Head of caudate nucleus (tissue), 42 donors: ENCODE measurements at regions of chr20 and their contacts with region 1.

Region 1: GRCh38 chr20:53915446-53916172 is 154.8 kb downstream of the BCAS1 start:
- DNase-seq: peak; percentile 83 to 99 (median 95)

Region 2: DNA sequence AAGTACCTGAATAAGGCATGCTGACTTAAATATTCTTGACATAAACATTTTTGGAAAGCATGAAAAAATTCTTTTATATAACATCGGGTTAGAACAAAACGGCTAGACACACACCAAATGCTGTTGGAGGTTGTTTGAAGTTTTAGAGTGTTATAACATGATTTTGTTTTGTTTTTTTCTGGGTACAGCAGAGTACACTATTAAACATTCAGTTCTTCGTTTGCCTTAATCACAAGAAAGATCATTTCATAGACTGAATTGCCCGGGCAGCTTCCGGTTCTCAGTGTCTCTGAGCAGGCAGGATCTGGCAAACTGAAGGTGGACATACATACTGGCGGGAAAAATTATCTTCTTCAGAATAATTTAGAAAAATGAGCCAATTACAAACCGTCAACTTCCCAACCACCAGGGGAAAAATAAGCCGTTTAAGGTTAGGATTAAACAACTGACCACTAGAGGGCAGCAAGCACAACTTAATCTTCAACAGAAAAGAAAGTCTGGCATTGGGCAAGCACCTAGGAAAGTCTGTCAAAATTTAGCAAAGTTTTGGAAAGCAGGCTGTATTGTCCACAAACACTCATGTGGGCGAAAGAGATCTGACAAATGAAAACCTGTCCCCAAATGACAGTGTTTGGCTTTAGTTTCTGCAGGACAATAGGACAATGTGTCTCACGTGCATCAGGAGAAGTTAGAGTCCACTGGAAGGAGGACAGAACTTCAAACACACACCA is 337.0 kb before region 1 on chr20:
- intact Hi-C with region 1: loop called (anchors 5 kb)
- DNase-seq: peak in 28 of 42 donors; percentile 17 to 90 (median 64)

Region 3: DNA sequence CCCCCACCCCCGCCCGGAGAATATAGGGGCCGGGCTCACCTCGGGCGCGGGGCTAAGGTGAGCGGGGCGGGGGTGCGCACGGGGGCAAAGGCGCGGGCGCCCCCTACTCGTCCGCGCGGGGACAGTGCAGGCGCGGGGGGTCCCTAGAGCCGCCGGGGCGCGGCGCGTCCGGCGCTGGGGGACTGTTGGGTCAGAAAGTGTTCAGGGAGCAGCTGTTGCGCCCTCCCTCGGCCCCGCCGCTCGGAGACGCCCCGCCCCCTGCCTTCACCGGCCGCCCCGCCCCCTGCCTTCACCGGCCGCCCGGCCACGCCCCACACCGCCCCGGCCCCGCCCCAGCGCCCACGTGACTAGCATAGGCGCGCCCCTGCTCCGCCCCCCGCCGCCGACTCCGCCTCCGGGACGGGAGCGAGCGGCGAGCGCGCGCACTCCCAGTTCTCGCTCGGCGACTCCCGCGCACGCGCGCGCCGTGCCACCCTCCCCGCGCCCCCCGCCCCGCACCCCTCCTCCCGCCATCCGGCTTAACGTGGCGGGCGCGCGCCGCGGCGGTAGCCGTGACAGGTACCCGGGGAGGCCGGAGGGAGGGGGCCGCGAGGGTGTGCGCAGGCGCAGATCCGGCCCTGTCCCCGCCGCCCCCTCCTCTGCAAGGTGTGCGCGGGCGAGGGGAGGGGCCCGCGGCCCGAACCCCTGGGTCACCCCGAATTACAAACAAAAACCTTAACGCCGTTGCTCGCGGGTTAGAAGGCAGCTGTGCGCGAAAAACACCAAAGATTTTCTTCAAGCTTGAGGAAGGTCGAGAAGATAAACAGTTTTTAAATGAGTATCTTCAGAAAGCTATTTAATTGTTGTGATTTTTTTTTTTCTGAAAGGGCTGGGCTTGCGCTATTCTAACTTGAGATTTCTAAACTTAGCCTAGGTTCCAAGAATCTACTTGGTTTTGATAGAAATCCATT is 321.3 kb before region 1 on chr20:
- intact Hi-C with region 1: loop called (anchors 5 kb)
- DNase-seq: peak; percentile 86 to 100 (median 97)

Region 4: GRCh38 chr20:53773792-53774401 is 141.7 kb before region 1 on chr20:
- intact Hi-C with region 1: no loop called
- DNase-seq: peak in 3 of 42 donors; percentile 13 to 41 (median 21)